Heart left ventricle (tissue), 16 donors: ENCODE measurements at regions of chr2 and their contacts with region 1.

Region 1: GRCh38 chr2:134295441-134295840 is 41.6 kb downstream of the MGAT5 start:
- DNase-seq: no peak
- ATAC-seq: peak; percentile 43 to 70 (median 52)
- H3K4me3 ChIP-seq: no peak overlapping the region
- H3K27ac ChIP-seq: peak overlapping the region in 8 of 12 donors; percentile 5 to 74 (median 36)
- H3K4me1 ChIP-seq: peaks cover 0 to 53% (median 24%) of the 10 kb centered on the region in 12 donors
- H3K27me3 ChIP-seq: no peaks in the 10 kb centered on the region
- CTCF ChIP-seq: no peak
- POLR2A ChIP-seq: no peak

Region 2: DNA sequence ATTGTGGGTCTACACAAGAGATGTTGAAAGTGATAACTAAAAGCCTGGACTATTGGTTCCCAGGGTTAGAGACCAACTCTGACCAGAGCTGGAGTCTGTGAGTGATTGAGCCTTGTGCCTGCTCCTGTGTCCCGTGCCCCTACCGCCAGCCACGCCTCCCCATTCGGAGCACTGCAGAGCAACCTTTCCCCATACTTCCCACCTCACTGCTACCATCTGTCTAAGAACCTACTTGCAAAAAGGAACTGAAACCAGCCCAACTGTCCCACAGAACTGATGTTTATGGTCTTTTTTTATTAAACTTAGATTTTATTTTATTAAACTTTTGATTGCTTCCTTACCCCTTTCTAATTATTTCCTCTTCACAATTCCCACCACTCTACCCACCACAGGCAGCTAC is 341.9 kb before region 1 on chr2:
- intact Hi-C with region 1: no loop called
- DNase-seq: no peak
- ATAC-seq: no peak
- H3K4me3 ChIP-seq: no peak overlapping the region
- H3K27ac ChIP-seq: no peak overlapping the region
- H3K4me1 ChIP-seq: peaks cover 0 to 40% (median 7%) of the 10 kb centered on the region in 12 donors
- H3K27me3 ChIP-seq: no peaks in the 10 kb centered on the region
- CTCF ChIP-seq: no peak
- POLR2A ChIP-seq: no peak

Region 3: DNA sequence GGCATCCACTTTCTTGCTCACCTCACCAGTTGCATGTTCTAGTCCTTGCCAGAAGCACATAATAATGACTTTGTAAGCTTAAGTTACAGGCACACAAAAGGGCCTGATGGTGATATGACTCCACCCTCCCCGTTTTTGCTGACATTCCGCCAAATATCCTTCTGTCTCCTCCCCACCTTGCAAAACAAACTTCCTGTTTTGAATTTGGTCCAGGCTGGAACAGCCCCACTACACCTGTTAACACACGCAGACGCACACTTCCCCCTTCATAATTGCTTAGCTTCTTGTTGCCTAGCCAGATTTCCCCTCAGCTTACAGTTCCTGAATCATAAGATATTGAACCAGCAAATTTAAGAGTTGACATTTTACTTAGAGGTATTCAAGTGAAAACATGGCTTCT is 41.6 kb before region 1 on chr2 and contains the start of gene MGAT5:
- intact Hi-C with region 1: loop called in 1 of 10 experiments (anchors 5 kb)
- DNase-seq: no peak
- ATAC-seq: peak in 3 of 4 donors; percentile 6 to 61 (median 31)
- H3K4me3 ChIP-seq: no peak within 1 kb of the TSS
- H3K27ac ChIP-seq: peak within 1 kb of the TSS in 1 of 12 donors; percentile 2
- H3K4me1 ChIP-seq: peaks cover 9 to 78% (median 46%) of the 10 kb centered on the region in 12 donors
- H3K27me3 ChIP-seq: no peaks in the 10 kb centered on the region
- CTCF ChIP-seq: no peak
- POLR2A ChIP-seq: no peak
- total RNA-seq, gene MGAT5: 63.1 to 116 (median 84.5) TPM